ENCODE measurements at regions of chr9 and their contacts with region 1.

Region 1: GRCh38 chr9:133023117-133023890 is 7.5 kb upstream of the GTF3C5 start:
- DNase-seq: peak in 1 of 2 experiments; percentile 57
- H3K4me3 ChIP-seq: no peak overlapping the region
- H3K27ac ChIP-seq: no peak overlapping the region
- H3K4me1 ChIP-seq: peaks cover 0 to 2% (median 0%) of the 10 kb centered on the region in 4 experiments; a peak in 2 of 7 replicates
- H3K27me3 ChIP-seq: peaks cover 0 to 3% (median 0%) of the 10 kb centered on the region in 4 experiments; a peak in 3 of 7 replicates
- CTCF ChIP-seq: no peak
- EP300 ChIP-seq: no peak
- POLR2A ChIP-seq: no peak
- RAD21 ChIP-seq: no peak

Region 2: DNA sequence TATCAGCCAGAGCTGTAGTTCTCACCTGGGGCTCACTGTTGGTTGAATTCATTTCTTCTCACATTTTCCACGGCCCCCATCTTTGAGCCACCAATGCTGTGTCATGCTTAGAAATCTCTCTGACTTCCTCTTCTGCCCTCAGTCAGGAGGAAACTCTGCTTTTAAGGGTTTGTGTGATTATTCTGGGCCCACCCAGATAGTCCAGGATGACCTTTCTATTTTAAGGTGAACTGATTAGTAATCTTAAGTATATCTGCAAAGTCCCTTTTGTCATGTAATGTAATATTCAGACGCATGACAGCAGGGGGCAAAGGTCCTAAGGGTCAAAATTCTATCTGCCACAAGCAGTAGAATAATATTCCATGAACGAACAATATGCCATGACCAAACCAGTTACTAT is 233.6 kb before region 1 on chr9:
- CTCF ChIA-PET with region 1: no interaction called
- POLR2A ChIA-PET with region 1: no interaction called
- DNase-seq: no peak
- H3K4me3 ChIP-seq: no peak overlapping the region
- H3K27ac ChIP-seq: no peak overlapping the region
- H3K4me1 ChIP-seq: no peaks in the 10 kb centered on the region
- H3K27me3 ChIP-seq: peaks cover 0 to 28% (median 23%) of the 10 kb centered on the region in 4 experiments; a peak in 6 of 7 replicates
- CTCF ChIP-seq: no peak
- EP300 ChIP-seq: no peak
- POLR2A ChIP-seq: no peak
- RAD21 ChIP-seq: no peak

Region 3: GRCh38 chr9:132973713-132974112 is 49.6 kb before region 1 on chr9:
- CTCF ChIA-PET with region 1: interaction called, 20 read pairs
- POLR2A ChIA-PET with region 1: no interaction called
- DNase-seq: no peak
- H3K4me3 ChIP-seq: no peak overlapping the region
- H3K27ac ChIP-seq: no peak overlapping the region
- H3K4me1 ChIP-seq: peaks cover 0 to 9% (median 3%) of the 10 kb centered on the region in 4 experiments; a peak in 6 of 7 replicates
- H3K27me3 ChIP-seq: peaks cover 0 to 23% (median 9%) of the 10 kb centered on the region in 4 experiments; a peak in 5 of 7 replicates
- CTCF ChIP-seq: no peak
- EP300 ChIP-seq: no peak
- POLR2A ChIP-seq: no peak
- RAD21 ChIP-seq: no peak

Region 4: GRCh38 chr9:132997591-132997990 is 25.7 kb before region 1 on chr9:
- CTCF ChIA-PET with region 1: interaction called, 57 read pairs
- POLR2A ChIA-PET with region 1: no interaction called
- DNase-seq: no peak
- H3K4me3 ChIP-seq: no peak overlapping the region
- H3K27ac ChIP-seq: no peak overlapping the region
- H3K4me1 ChIP-seq: peaks cover 0 to 14% (median 7%) of the 10 kb centered on the region in 4 experiments; a peak in 5 of 7 replicates
- H3K27me3 ChIP-seq: peaks cover 0 to 7% (median 6%) of the 10 kb centered on the region in 4 experiments; a peak in 5 of 7 replicates
- CTCF ChIP-seq: no peak
- EP300 ChIP-seq: no peak
- POLR2A ChIP-seq: no peak
- RAD21 ChIP-seq: no peak

Region 5: GRCh38 chr9:133009906-133010582 is 13.3 kb before region 1 on chr9:
- CTCF ChIA-PET with region 1: interaction called, 30 read pairs
- POLR2A ChIA-PET with region 1: interaction called, 3 read pairs
- DNase-seq: no peak
- H3K4me3 ChIP-seq: no peak overlapping the region
- H3K27ac ChIP-seq: no peak overlapping the region
- H3K4me1 ChIP-seq: peaks cover 0 to 2% (median under 1%) of the 10 kb centered on the region in 4 experiments; a peak in 3 of 7 replicates
- H3K27me3 ChIP-seq: peaks cover 0 to 17% (median 6%) of the 10 kb centered on the region in 4 experiments; a peak in 6 of 7 replicates
- CTCF ChIP-seq: no peak
- EP300 ChIP-seq: no peak
- POLR2A ChIP-seq: no peak
- RAD21 ChIP-seq: no peak

Region 6: DNA sequence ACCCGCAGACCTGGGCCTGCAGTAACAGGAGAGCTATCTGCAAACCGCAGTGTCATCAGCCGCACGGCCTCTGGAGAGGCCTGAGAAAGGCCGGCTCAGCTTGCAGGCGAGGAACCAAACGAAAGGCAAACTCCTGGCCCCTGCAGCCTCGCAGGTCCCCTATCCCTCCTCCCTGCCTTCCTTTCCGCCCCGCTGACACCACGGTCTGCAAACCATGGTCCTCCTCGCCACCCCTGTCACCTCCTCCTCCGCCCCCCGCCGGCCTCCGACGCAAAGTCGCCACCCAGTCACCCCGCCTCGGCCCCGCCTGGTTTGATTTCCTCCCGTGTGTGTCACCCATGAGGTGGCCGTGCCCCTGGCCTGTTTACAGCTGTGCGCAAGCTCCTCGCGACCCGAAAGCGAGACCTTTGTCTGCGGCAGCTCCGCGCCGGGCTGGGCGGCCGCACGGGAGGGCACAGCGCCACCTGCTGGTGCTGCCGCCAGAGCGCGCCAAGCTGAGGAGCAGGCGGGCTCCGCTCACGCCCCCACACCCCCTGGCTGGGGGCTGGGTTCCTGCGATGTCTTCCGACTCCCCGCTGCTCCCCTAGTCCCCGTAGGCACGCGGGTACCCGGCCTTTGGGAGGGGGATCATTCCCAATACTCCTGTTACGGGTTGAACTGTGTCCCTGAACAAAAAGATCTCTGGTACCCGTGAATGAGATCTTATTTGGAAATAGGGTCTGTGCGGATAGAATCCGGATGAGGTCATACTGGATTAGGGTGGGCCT is 121.0 kb after region 1 on chr9:
- CTCF ChIA-PET with region 1: interaction called, 10 read pairs
- POLR2A ChIA-PET with region 1: interaction called, 3 read pairs
- DNase-seq: peak in 1 of 2 experiments; percentile 94
- H3K4me3 ChIP-seq: peak overlapping the region; percentile 9 to 60 (median 47); a peak in 6 of 8 replicates
- H3K27ac ChIP-seq: peak overlapping the region; percentile 16; the same call in 1 of the 2 replicates
- H3K4me1 ChIP-seq: peaks cover 0 to 21% (median 12%) of the 10 kb centered on the region in 4 experiments; a peak in 5 of 7 replicates
- H3K27me3 ChIP-seq: peaks cover 0 to 11% (median 0%) of the 10 kb centered on the region in 4 experiments; a peak in 2 of 7 replicates
- CTCF ChIP-seq: peak in 2 of 3 experiments; percentile 98 to 99; a peak in 3 of 4 replicates
- EP300 ChIP-seq: peak in 1 of 2 experiments; percentile 5; a peak in 1 of 3 replicates
- POLR2A ChIP-seq: peak in 1 of 2 experiments; percentile 47; a peak in 1 of 3 replicates
- RAD21 ChIP-seq: peak; percentile 70 to 83

Region 7: GRCh38 chr9:133347985-133348717 is 324.8 kb after region 1 on chr9 and contains the starts of genes MED22 and RPL7A:
- CTCF ChIA-PET with region 1: no interaction called
- POLR2A ChIA-PET with region 1: no interaction called
- DNase-seq: peak; percentile 77 to 93
- H3K4me3 ChIP-seq: peak within 1 kb of the TSS; percentile 93 to 100 (median 96)
- H3K27ac ChIP-seq: peak within 1 kb of the TSS; percentile 99
- H3K4me1 ChIP-seq: peaks cover 0 to 10% (median 7%) of the 10 kb centered on the region in 4 experiments; a peak in 6 of 7 replicates
- H3K27me3 ChIP-seq: no peaks in the 10 kb centered on the region
- CTCF ChIP-seq: no peak
- EP300 ChIP-seq: no peak
- POLR2A ChIP-seq: peak in 1 of 2 experiments; percentile 97; a peak in 1 of 3 replicates
- RAD21 ChIP-seq: no peak
- total RNA-seq, gene MED22: 56.4 and 61.8 TPM in 2 replicates
- total RNA-seq, gene RPL7A: 2,578 and 2,633 TPM in 2 replicates